Activated CD8-positive, alpha-beta T cell treated with anti-CD3 and anti-CD28 coated beads, Interleukin-2, amount 10 ng/mL, durations not matched to agents 7 days and 5 days (primary cell): ENCODE measurements at regions of chr21 and their contacts with region 1.

Region 1: DNA sequence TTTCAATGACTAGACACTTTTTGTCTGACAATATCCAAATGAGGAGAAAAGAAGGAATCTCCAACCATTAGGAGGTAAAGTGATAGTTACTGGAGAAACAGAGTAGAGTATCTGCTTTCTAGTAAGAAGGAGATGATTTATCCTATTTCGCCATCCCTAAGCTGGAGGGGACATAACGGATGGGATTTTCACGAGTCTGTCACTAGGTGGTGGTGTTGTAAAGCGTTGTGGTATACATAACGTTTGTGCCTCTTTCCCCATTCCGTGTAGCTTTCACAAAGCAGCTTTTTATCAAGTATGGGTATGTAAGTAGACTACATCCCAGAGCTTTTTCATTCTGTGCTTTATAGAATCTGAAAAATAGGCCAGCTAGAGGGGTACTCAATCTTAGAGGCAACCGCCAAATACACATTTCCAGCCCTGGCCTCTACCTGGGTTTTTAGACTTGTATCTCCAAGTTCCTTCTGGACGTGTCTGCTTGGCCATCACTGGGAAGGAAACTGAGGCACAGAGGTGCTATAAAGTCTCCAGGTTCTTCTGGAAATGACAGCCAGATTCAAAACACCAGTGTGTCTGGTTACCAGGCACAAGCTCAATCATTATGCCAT is 33.3 kb upstream of the FAM3B start:
- DNase-seq: peak; percentile 72
- ATAC-seq: peak; percentile 92
- H3K4me3 Mint-ChIP-seq: no peak overlapping the region
- H3K27ac Mint-ChIP-seq: no peak overlapping the region
- H3K4me1 Mint-ChIP-seq: no peaks in the 10 kb centered on the region
- H3K27me3 Mint-ChIP-seq: peaks cover 14% of the 10 kb centered on the region

Region 2: DNA sequence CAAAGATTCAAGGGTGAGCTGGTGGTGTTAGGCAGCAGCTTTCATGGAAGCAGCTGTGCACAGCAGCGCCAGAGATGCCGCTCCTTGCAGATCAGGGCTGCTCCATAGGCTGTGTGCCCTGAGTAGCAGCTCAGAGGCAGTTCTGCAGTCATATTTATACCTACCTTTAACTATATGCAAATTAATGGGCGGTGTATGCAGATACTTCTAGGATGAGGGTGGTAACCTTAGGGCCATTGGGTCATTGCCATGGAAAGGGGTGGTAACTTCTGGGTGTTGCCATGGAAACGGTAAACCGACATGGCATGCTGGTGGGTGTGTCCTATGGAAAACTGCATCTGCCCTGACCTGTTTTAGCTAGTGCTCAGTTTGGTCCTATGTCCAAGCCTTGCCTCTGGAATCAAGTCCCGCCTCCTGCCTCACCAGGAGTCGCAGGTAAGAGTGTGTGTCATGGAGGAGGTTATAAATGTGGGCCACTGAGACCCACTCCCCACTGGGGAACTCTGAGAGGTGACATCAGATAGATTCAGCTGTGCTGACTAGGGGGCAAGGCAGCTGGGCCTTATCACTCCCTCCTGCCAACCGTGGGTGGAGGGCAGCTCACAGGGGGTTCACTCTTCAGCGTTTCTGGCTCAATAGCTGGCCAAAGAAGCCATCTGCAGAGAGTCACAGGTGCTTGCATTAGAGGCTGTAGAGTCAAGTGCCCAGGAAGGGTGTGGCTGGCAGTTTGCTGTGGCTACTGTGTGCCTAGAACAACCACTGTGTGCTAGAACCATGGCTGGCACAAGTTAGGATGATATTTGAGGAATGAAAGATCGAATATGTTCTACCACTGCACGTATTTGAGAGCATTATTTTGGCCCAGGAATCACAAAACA is 96.4 kb before region 1 on chr21:
- CTCF ChIA-PET with region 1: no interaction called
- POLR2A ChIA-PET with region 1: no interaction called
- DNase-seq: no peak
- ATAC-seq: no peak
- H3K4me3 Mint-ChIP-seq: no peak overlapping the region
- H3K27ac Mint-ChIP-seq: no peak overlapping the region
- H3K4me1 Mint-ChIP-seq: no peaks in the 10 kb centered on the region
- H3K27me3 Mint-ChIP-seq: peaks cover 2% of the 10 kb centered on the region

Region 3: GRCh38 chr21:41321211-41321907 is 38.0 kb after region 1 on chr21:
- CTCF ChIA-PET with region 1: interaction called, 17 read pairs
- POLR2A ChIA-PET with region 1: no interaction called
- DNase-seq: peak; percentile 38
- ATAC-seq: peak; percentile 69
- H3K4me3 Mint-ChIP-seq: no peak overlapping the region
- H3K27ac Mint-ChIP-seq: no peak overlapping the region
- H3K4me1 Mint-ChIP-seq: peaks cover 11% of the 10 kb centered on the region
- H3K27me3 Mint-ChIP-seq: peaks cover 33% of the 10 kb centered on the region

Region 4: DNA sequence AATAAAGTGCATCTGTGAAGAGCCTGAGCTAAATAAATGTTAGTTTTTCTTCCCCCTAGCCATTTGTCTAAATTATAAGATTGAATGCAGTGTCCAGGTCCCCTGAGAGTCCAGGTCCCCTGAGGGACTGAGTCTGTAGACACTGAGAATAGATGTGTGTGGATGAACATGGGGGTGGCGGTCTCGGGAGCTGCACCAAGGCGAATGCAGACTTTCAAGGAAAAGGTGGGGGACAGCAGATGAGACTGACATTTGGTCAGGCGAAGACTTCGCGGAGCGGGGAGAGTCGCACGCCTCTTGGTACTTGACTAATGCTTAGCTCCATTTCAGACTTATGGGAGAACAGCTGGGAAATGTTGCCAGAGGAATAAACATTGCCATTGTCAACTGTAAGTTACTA is 60.8 kb after region 1 on chr21:
- CTCF ChIA-PET with region 1: no interaction called
- POLR2A ChIA-PET with region 1: no interaction called
- DNase-seq: no peak
- ATAC-seq: no peak
- H3K4me3 Mint-ChIP-seq: no peak overlapping the region
- H3K27ac Mint-ChIP-seq: no peak overlapping the region
- H3K4me1 Mint-ChIP-seq: peaks cover 2% of the 10 kb centered on the region
- H3K27me3 Mint-ChIP-seq: peaks cover 32% of the 10 kb centered on the region

Region 5: DNA sequence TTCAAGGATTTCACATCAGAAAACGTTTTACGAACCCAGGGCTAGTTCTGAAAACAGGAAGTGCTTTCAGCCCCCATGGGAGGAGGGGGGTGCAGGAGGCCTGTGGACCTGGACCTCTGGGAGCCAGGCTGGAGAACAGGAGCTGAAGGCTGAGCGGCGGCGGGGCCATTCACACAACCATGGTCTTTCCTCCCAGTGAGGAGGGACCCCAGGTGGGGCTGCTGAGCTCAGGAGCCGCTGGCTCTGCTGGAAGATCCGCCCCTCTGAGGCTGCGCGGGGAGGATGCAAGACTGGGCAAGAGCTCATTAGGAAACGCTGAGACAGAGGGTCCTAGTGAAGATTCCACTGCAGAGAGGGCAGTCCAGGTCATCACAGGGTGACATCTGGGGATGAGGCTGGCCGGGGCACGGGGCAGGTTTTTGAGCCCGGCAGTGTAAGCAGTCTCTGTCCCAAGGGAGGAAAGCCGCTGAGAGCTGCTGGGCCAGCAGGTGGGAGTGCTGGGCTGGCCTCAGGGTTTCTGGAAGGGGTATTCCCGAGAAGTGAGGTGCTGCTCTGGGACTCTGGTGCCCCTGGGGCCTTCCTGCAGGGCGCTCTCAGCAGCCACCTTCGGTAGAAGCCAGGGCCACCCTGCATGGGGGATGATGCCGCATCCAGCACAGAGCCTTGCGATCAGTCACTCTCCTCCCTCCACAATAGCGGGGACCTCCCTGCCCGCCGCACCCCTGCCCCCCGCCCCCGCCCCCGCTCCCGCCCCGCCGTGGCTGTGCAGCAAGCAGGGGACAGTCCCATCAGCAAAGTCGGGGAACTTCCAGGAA is 86.0 kb after region 1 on chr21:
- CTCF ChIA-PET with region 1: interaction called, 23 read pairs
- POLR2A ChIA-PET with region 1: interaction called, 4 read pairs
- DNase-seq: peak; percentile 52
- ATAC-seq: peak; percentile 61
- H3K4me3 Mint-ChIP-seq: peak overlapping the region; percentile 77
- H3K27ac Mint-ChIP-seq: peak overlapping the region; percentile 95
- H3K4me1 Mint-ChIP-seq: peaks cover 77% of the 10 kb centered on the region
- H3K27me3 Mint-ChIP-seq: no peaks in the 10 kb centered on the region

Region 6: DNA sequence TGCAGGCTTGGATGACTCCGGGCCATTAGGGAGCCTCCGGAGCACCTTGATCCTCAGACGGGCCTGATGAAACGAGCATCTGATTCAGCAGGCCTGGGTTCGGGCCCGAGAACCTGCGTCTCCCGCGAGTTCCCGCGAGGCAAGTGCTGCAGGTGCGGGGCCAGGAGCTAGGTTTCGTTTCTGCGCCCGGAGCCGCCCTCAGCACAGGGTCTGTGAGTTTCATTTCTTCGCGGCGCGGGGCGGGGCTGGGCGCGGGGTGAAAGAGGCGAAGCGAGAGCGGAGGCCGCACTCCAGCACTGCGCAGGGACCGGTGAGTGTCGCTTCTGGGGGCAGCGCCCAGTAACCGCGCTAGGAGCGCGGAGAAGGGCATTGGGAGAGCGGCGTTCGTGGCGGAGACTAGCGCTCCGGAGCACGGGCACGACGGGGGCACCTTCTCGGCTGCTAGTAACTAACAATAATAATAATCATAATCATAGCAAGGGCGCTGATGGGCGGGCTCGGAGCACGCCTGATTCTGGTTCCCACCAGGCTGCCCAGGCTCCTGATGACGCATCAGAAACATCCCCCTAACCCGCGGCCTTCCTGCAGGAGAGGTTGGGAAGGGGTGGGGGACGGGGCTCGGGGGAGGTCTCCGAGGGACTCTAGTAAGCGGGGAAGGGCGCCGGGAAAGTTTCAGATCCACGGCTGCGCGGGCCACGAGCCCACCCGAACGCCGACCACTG is 142.8 kb after region 1 on chr21 and contains the start of gene MX1:
- CTCF ChIA-PET with region 1: interaction called, 13 read pairs
- POLR2A ChIA-PET with region 1: interaction called, 29 read pairs
- DNase-seq: peak; percentile 96
- ATAC-seq: peak; percentile 94
- H3K4me3 Mint-ChIP-seq: peak within 1 kb of the TSS; percentile 94
- H3K27ac Mint-ChIP-seq: peak within 1 kb of the TSS; percentile 100
- H3K4me1 Mint-ChIP-seq: peaks cover 83% of the 10 kb centered on the region
- H3K27me3 Mint-ChIP-seq: no peaks in the 10 kb centered on the region
- total RNA-seq, gene MX1: 563 to 584 TPM

Region 7: GRCh38 chr21:41451753-41452676 is 168.7 kb after region 1 on chr21:
- CTCF ChIA-PET with region 1: interaction called, 15 read pairs
- POLR2A ChIA-PET with region 1: interaction called, 6 read pairs
- DNase-seq: no peak
- ATAC-seq: no peak
- H3K4me3 Mint-ChIP-seq: no peak overlapping the region
- H3K27ac Mint-ChIP-seq: peak overlapping the region; percentile 55
- H3K4me1 Mint-ChIP-seq: peaks cover 26% of the 10 kb centered on the region
- H3K27me3 Mint-ChIP-seq: no peaks in the 10 kb centered on the region

Region 8: DNA sequence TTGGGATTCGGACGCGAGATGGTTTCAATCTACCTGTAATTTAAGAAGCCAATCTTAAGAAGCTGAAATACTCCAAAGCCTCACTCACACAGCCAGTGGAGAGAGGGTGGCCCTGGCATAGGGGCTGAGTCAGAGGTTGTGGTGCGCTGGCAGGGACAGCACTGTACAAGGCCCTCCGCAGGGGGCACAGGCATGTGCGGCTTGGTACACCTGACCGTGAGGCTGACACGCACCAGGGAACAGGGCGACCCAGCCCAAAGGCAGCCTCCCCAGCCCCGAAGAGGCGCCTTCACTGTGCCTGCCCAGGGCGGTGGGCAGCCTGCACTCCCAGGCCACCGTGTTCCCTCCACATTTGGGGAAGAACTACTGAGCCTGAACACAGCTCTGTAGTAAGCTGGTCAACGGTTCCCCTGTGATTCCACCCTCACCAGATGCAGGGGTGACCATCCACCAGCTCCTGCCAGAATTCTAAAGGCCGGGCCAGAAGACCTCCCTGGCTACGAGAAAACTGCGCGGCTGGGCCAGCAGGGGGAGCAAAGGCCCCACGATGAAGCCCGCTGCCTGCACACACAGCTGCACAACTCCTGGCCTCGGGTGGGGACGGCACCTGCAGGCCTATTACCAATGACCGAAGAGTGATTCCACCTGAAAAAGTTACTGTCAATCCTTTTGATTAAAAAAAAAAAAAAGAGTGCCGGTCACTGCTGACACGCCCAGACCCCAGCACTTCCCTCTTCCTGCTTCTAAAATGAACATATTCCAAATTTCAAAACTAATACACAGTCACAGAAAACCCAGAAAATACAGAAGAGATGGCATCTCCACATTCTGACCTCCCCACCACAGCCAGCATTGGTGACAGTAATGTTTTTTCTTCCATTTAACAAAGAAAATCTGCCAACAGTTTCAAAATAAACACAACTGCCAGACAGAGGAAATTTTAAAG is 533.2 kb after region 1 on chr21:
- CTCF ChIA-PET with region 1: interaction called, 24 read pairs
- POLR2A ChIA-PET with region 1: no interaction called
- DNase-seq: peak; percentile 70
- ATAC-seq: peak; percentile 86
- H3K4me3 Mint-ChIP-seq: no peak overlapping the region
- H3K27ac Mint-ChIP-seq: no peak overlapping the region
- H3K4me1 Mint-ChIP-seq: no peaks in the 10 kb centered on the region
- H3K27me3 Mint-ChIP-seq: no peaks in the 10 kb centered on the region